Mammary epithelial cell (primary cell): ENCODE measurements at regions of chr12 and their contacts with region 1.

Region 1: DNA sequence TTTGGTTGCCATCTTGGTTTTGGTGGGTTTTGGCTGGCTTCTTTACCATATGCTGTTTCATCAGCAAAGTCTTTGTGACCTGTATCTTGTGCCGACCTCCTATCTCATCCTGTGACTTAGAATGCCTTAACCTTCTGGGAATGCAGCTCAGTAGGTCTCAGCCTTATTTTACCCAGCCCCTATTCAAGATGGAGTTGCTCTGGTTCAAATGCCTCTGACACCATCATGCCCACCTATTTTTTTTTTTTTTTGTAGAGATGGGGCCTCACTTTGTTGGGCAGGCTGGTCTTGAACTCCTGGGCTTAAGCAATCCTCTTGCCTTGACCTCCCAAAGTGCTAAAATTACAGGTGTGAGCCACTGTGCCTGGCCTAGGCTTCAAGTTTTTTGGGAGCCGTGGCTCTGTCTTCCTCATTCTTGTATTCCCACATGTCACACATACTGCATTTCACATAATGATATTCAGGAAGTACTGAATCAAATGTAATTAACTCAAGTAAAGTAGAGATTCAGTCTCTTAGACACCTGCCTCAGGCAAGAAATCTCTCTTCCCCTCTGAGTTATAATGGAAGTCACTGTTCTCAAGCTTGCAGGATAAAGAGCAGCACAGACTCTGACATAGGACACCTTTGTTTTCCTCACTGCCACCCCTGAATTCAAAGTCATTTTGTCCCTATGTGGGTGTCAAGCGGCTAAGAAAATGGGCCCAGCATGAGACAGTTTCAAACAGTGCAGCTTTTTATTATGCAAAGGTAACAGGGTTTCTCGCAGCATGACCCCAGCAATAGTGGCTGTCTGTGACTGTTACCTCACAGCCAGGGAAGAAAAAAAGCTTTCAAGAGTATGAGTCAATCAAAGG is 159.0 kb downstream of the PTPN11 start:
- DNase-seq: no peak
- H3K4me3 ChIP-seq: no peak overlapping the region
- H3K27ac ChIP-seq: no peak overlapping the region
- H3K4me1 ChIP-seq: no peaks in the 10 kb centered on the region
- H3K27me3 ChIP-seq: peaks cover 6% of the 10 kb centered on the region
- CTCF ChIP-seq: no peak

Region 2: DNA sequence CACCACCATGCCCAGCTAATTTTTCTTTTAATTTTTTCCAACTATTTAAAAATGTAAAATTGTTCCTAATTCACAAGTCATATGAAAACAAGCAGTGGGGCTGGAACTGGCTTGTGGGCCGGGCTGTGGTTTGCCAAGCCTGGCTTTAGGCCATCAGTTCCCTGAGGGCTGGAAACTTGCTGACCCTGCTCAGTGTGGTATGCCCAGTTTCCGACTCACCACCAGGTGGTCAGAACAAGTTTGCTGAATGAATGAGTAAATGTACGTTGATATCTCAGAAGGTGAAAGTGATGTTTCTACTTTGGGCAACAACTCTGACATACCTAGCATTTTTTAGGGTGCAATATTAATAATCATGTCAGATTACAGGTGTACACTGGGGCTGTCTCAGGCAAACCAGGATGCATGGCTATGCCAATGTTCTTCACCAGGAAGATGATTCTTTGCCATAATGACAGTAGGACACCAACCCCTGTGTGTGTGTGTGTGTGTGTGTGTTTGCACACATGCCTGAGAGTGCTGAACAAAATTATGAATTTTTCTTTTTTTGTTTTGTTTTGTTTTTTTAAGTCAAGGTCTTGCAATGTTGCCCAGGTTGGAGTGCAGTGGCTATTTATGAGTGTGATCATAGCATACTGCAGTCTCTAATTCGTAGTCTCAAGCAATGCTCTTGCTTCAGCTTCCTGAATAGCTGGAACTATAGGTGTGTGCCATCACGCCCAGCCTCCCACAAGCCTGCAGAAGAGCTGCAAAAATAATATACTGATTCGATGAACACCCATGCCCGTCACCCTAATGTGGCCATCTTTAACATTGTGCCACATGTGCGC is 52.8 kb before region 1 on chr12:
- CTCF ChIA-PET with region 1: no interaction called
- dilution Hi-C with region 1: loop called (anchors 5 kb)
- in situ Hi-C with region 1: no loop called
- intact Hi-C with region 1: no loop called
- DNase-seq: peak; percentile 79
- H3K4me3 ChIP-seq: no peak overlapping the region
- H3K27ac ChIP-seq: no peak overlapping the region
- H3K4me1 ChIP-seq: peaks cover 9% of the 10 kb centered on the region
- H3K27me3 ChIP-seq: no peaks in the 10 kb centered on the region
- CTCF ChIP-seq: peak; percentile 33 to 48

Region 3: GRCh38 chr12:112616469-112617152 is 38.9 kb after region 1 on chr12:
- CTCF ChIA-PET with region 1: interaction called, 16 read pairs
- dilution Hi-C with region 1: loop called (anchors 5 kb)
- in situ Hi-C with region 1: no loop called
- intact Hi-C with region 1: no loop called
- DNase-seq: no peak
- H3K4me3 ChIP-seq: no peak overlapping the region
- H3K27ac ChIP-seq: no peak overlapping the region
- H3K4me1 ChIP-seq: no peaks in the 10 kb centered on the region
- H3K27me3 ChIP-seq: peaks cover 2% of the 10 kb centered on the region
- CTCF ChIP-seq: no peak

Region 4: DNA sequence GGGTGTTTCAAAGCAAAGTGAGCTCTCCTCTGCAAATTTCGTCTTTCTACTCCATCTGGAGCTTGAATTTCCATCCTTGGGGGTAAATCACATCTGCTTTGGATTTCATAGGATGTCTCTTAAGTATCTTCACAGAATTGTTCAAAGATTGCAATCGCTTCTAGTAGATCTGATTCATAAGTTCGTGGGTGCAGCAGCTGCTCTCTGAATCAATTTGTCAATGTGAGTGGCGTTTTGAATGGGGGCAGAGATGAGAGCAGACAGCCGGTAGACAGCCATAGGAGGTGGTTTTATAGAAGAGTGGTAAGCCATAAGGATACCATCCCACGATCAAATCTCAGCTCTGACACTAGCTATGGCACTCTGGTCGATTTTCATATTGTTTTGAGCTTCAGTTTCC is 67.9 kb after region 1 on chr12:
- CTCF ChIA-PET with region 1: no interaction called
- dilution Hi-C with region 1: loop called (anchors 5 kb)
- in situ Hi-C with region 1: no loop called
- intact Hi-C with region 1: no loop called
- DNase-seq: no peak
- H3K4me3 ChIP-seq: no peak overlapping the region
- H3K27ac ChIP-seq: no peak overlapping the region
- H3K4me1 ChIP-seq: no peaks in the 10 kb centered on the region
- H3K27me3 ChIP-seq: no peaks in the 10 kb centered on the region
- CTCF ChIP-seq: no peak

Region 5: GRCh38 chr12:112868459-112869041 is 290.8 kb after region 1 on chr12:
- CTCF ChIA-PET with region 1: no interaction called
- dilution Hi-C with region 1: no loop called
- in situ Hi-C with region 1: no loop called
- intact Hi-C with region 1: no loop called
- DNase-seq: peak; percentile 20
- H3K4me3 ChIP-seq: no peak overlapping the region
- H3K27ac ChIP-seq: no peak overlapping the region
- H3K4me1 ChIP-seq: no peaks in the 10 kb centered on the region
- H3K27me3 ChIP-seq: peaks cover 4% of the 10 kb centered on the region
- CTCF ChIP-seq: no peak